ENCODE measurements at regions of chr2 and their contacts with region 1.

Region 1: GRCh38 chr2:172427256-172427989 is at the start of gene ITGA6:
- DNase-seq: peak; percentile 70 to 84
- ATAC-seq: peak; percentile 85 to 90
- H3K4me3 ChIP-seq: peak within 1 kb of the TSS; percentile 82
- H3K27ac ChIP-seq: peak within 1 kb of the TSS; percentile 80 to 95
- H3K4me1 ChIP-seq: peaks cover 28% of the 10 kb centered on the region
- CTCF ChIP-seq: no peak
- EP300 ChIP-seq: no peak
- POLR2A ChIP-seq: peak; percentile 89
- RAD21 ChIP-seq: peak in 1 of 2 experiments; percentile 42; a peak in 3 of 5 replicates
- polyA plus RNA-seq, gene ITGA6: 27.7 and 41.0 TPM in 2 replicates

Region 2: GRCh38 chr2:172416447-172417058 is 10.9 kb before region 1 on chr2:
- CTCF ChIA-PET with region 1: interaction called, 15 read pairs
- POLR2A ChIA-PET with region 1: no interaction called
- DNase-seq: no peak
- ATAC-seq: no peak
- H3K4me3 ChIP-seq: no peak overlapping the region
- H3K27ac ChIP-seq: no peak overlapping the region
- H3K4me1 ChIP-seq: no peaks in the 10 kb centered on the region
- CTCF ChIP-seq: no peak
- EP300 ChIP-seq: no peak
- POLR2A ChIP-seq: no peak
- RAD21 ChIP-seq: no peak

Region 3: GRCh38 chr2:172442072-172442895 is 14.9 kb after region 1 on chr2:
- CTCF ChIA-PET with region 1: interaction called, 79 read pairs
- POLR2A ChIA-PET with region 1: interaction called, 59 read pairs
- DNase-seq: peak; percentile 86 to 94
- ATAC-seq: peak; percentile 96 to 98
- H3K4me3 ChIP-seq: peak overlapping the region; percentile 17; the same call in 1 of the 3 replicates
- H3K27ac ChIP-seq: peak overlapping the region; percentile 76 to 82
- H3K4me1 ChIP-seq: peaks cover 60% of the 10 kb centered on the region
- CTCF ChIP-seq: no peak
- EP300 ChIP-seq: no peak
- POLR2A ChIP-seq: no peak
- RAD21 ChIP-seq: no peak

Measured in A549 (cell line).